GM13977 (cell line): ENCODE measurements at regions of chr1 and their contacts with region 1.

Region 1: GRCh38 chr1:58515794-58516401 is 30.6 kb downstream of the OMA1 start:
- DNase-seq: peak; percentile 44
- CTCF ChIP-seq: peak; percentile 61

Region 2: DNA sequence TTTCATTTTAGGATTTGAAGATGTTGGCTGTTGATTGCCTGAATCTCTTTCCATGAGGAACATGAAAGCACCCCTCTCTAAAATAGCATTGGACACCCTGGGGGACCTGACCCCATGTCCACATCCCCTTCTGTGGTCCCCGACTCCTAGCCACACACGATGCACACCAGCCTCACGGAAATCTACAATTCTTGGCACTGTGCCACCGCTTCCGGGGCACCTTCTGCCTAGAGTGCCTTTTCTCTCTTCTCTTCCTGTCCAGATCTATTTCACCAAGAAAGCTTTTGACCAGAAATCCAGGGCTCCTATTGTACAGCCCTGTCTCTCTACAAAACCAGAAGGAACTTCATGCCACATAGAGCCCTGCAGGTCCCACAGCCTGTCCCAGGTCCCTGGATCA is 133.7 kb after region 1 on chr1:
- in situ Hi-C with region 1: loop called (anchors 10 kb)
- DNase-seq: no peak
- CTCF ChIP-seq: no peak

Region 3: DNA sequence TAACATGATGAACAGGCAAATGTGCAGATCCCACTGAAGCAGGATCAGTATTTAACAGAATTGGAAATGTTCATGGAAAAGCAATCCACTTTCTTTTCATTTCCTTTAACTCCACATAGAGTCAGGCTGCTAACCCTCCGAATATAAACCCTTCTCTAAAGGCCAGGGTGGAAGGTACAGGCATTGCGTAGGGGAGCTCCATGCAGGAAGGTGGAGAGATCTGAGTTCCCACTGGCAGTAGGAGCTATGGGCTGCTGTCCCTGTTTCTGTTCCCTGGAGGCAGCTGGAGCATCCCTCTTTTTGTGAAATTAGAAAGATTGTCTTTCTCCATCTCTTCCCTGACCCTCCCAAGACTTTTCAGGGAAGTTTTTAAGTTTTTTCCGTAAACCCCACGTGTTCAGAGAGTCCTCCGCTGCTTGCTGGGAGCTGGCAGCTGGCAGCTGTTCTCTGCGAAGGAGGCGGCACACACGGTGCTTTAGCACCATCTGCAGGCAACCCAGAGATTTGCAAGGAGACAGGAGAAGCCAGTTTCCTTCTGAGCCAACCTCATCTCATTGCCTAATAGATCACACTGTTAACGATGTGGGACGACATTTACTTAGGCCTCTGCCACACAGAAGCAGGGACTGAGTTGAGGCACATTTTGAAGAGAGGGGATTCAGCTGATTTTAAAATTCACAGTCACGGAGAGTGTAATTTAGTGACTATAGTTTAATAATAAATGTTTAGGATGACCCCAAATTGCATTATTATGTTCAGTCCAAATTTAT is 1243.4 kb after region 1 on chr1:
- in situ Hi-C with region 1: loop called (anchors 25 kb)
- DNase-seq: peak; percentile 70
- CTCF ChIP-seq: peak; percentile 90